ENCODE measurements at regions of chr10 and their contacts with region 1.

Region 1: GRCh38 chr10:95430231-95430951 is 130.8 kb downstream of the SORBS1 start:
- DNase-seq: peak in 4 of 5 donors; percentile 10 to 58 (median 32)
- H3K4me3 ChIP-seq: no peak overlapping the region
- H3K4me3 Mint-ChIP-seq: no peak overlapping the region
- H3K27ac ChIP-seq: no peak overlapping the region
- H3K27ac Mint-ChIP-seq: no peak overlapping the region
- H3K4me1 ChIP-seq: no peaks in the 10 kb centered on the region
- H3K4me1 Mint-ChIP-seq: peaks cover 0 to 3% (median 0%) of the 10 kb centered on the region in 3 donors
- H3K27me3 ChIP-seq: no peaks in the 10 kb centered on the region
- H3K27me3 Mint-ChIP-seq: no peaks in the 10 kb centered on the region

Region 2: DNA sequence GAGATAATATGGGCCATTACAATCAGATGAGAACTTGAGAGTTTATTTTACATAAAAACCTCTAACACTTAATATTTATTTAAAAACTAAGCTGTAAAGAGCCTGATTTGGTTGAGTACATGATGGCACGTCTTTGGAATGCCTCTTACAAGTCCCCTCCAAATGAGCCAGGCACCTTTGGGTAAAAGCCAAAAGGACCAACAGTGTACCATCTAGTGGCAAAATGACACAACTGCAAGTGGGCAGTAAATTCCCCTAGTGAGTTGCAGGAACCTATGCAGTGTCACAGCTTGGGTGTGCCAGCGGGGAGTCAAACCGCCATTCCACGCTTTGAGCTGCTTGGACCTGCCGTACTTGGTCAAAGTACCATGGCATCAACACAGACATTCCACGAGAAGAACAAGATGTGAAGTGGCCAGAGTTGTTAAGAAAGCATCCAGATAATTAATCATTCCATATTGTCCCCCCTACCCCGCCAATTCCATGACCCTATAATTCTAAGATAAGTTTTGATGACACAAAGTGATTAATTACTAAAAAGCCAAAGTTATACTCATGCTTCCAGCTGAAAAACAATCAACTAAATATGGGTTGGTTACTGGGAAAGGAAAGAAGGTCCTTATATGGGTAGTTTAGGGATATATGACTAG is 15.6 kb after region 1 on chr10:
- CTCF ChIA-PET with region 1: interaction called, 72 read pairs
- POLR2A ChIA-PET with region 1: no interaction called
- DNase-seq: peak in 1 of 5 donors; percentile 6
- H3K4me3 ChIP-seq: no peak overlapping the region
- H3K4me3 Mint-ChIP-seq: no peak overlapping the region
- H3K27ac ChIP-seq: no peak overlapping the region
- H3K27ac Mint-ChIP-seq: no peak overlapping the region
- H3K4me1 ChIP-seq: no peaks in the 10 kb centered on the region
- H3K4me1 Mint-ChIP-seq: peaks cover 2 to 5% (median 5%) of the 10 kb centered on the region in 3 donors
- H3K27me3 ChIP-seq: no peaks in the 10 kb centered on the region
- H3K27me3 Mint-ChIP-seq: peaks cover 6 to 28% of the 10 kb centered on the region in 2 donors

Region 3: GRCh38 chr10:95561182-95562075 is 131.0 kb after region 1 on chr10 and contains the start of gene SORBS1:
- CTCF ChIA-PET with region 1: no interaction called
- POLR2A ChIA-PET with region 1: no interaction called
- DNase-seq: peak; percentile 86 to 91 (median 87)
- H3K4me3 ChIP-seq: peak within 1 kb of the TSS; percentile 95
- H3K4me3 Mint-ChIP-seq: peak within 1 kb of the TSS; percentile 90 to 100 (median 99)
- H3K27ac ChIP-seq: peak within 1 kb of the TSS; percentile 59
- H3K27ac Mint-ChIP-seq: peak within 1 kb of the TSS; percentile 34 to 99 (median 96)
- H3K4me1 ChIP-seq: peaks cover 9% of the 10 kb centered on the region
- H3K4me1 Mint-ChIP-seq: peaks cover 7 to 20% (median 15%) of the 10 kb centered on the region in 3 donors
- H3K27me3 ChIP-seq: no peaks in the 10 kb centered on the region
- H3K27me3 Mint-ChIP-seq: peaks cover 3 to 8% of the 10 kb centered on the region in 2 donors
- total RNA-seq, gene SORBS1: 0.92 to 1.7 TPM

Region 4: DNA sequence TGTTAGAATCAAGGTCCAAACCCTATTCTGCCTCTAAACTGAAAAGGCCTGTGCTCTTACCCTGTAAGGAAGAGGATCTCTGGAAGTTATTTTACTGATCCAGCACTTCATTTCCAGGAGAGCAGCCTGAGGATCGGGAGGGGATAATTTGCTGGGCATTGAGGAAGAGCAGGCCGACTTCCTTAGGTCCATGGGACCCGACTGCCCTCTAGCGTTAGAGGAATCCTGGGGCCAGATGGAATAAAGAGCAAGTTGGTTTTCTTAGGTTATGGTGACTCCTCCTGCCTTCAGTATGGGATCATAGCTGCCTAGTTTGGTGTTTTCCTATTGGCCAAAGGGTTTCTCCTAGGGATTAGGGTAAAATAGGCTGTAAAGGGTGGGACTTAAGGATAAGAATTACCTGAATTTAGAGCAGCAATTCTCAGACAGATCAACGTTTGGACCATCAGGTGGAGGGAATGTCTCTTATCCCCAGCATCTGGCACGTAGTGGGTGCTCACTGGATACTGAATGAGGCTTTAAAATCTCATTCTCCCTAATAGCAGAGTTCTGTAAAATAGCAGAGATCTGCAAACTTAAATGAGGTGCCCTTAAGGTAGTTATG is 170.8 kb after region 1 on chr10:
- CTCF ChIA-PET with region 1: interaction called, 29 read pairs
- POLR2A ChIA-PET with region 1: no interaction called
- DNase-seq: peak; percentile 5 to 59 (median 15)
- H3K4me3 ChIP-seq: no peak overlapping the region
- H3K4me3 Mint-ChIP-seq: no peak overlapping the region
- H3K27ac ChIP-seq: no peak overlapping the region
- H3K27ac Mint-ChIP-seq: no peak overlapping the region
- H3K4me1 ChIP-seq: no peaks in the 10 kb centered on the region
- H3K4me1 Mint-ChIP-seq: no peaks in the 10 kb centered on the region
- H3K27me3 ChIP-seq: no peaks in the 10 kb centered on the region
- H3K27me3 Mint-ChIP-seq: peaks cover 5 to 7% of the 10 kb centered on the region in 2 donors